ENCODE measurements at regions of chr1 and their contacts with region 1.

Region 1: DNA sequence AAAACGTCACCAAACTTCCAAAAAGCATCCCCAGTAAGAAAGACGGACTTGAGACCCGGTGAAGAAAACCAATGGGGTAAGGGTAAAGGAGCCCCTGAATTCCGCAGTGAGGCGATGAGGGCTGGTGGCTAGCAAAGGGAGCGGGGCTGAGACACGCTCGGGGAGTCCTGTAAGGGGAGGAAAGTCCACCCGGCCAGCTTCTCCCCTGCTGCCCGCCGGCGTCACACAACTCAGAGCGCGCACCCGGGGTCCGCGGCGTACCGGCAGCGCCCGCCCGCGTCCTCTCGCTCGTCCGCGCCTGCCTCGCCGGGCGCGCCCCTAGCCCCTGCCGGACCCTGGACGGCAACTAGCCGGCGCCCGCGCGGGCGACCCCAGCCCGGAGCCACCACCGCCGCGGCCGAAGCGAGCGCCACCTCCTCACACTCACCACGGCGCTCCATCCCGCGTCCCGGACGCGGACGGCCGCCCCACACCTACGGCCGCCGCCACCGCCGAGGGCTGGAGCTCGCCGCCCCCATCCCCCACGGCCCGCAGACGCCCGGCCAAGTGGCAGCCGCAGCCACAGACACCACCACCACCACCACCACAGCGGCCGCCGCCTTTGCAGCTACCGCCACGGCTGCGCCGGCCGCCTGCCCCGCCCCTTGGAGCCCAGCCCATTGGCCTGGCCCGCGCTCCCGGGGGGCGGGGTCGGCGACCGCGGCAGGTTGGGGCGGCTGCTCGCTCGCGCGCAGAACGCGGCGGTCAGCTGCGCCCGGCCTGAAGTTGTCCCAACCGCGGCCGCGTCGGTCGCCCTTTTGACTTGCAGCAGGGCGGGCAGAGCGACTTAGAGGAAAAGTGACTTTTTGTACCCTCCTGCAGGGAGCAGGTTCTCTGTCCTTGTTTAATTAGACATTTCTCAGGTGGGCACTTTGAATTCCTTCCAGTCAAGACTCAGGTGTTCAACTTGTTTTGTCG is 10.0 kb upstream of the ARHGAP29 start:
- DNase-seq: peak; percentile 83
- H3K4me3 ChIP-seq: peak overlapping the region; percentile 50
- H3K27ac ChIP-seq: no peak overlapping the region
- H3K4me1 ChIP-seq: no peaks in the 10 kb centered on the region
- H3K27me3 ChIP-seq: peaks cover 13% of the 10 kb centered on the region
- CTCF ChIP-seq: no peak

Region 2: DNA sequence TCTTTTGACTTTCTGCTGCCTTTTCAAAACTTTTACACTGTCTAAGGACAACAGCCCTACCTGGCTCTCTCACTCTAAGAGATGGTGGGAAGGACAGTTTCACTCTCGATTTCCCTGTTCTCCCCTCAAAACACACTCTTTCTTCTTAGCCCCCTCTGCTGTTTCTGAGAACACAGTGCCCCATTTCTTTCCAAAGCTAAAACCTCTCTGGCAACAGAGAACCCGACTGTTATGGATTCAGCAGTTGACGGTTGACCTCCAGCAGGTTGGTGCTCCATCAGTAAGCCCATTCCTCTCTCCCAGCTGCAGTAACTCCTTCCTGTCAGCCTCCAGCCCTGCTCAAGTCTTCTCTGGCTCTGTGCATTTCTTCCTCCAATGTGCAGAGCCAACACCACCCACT is 82.6 kb after region 1 on chr1:
- intact Hi-C with region 1: loop called (anchors 5 kb)
- DNase-seq: no peak
- H3K4me3 ChIP-seq: no peak overlapping the region
- H3K27ac ChIP-seq: no peak overlapping the region
- H3K4me1 ChIP-seq: no peaks in the 10 kb centered on the region
- H3K27me3 ChIP-seq: no peaks in the 10 kb centered on the region
- CTCF ChIP-seq: no peak